ENCODE measurements at regions of chr3 and their contacts with region 1.

Region 1: GRCh38 chr3:47522082-47522987 is 8.8 kb upstream of the ELP6 start:
- DNase-seq: peak; percentile 55 to 77 (median 60)
- H3K4me3 ChIP-seq: no peak overlapping the region
- H3K4me3 Mint-ChIP-seq: no peak overlapping the region
- H3K27ac ChIP-seq: no peak overlapping the region
- H3K27ac Mint-ChIP-seq: peak overlapping the region in 3 of 8 donors; percentile 26 to 75 (median 73)
- H3K4me1 ChIP-seq: peaks cover 5% of the 10 kb centered on the region
- H3K4me1 Mint-ChIP-seq: no peaks in the 10 kb centered on the region
- H3K27me3 ChIP-seq: no peaks in the 10 kb centered on the region
- H3K27me3 Mint-ChIP-seq: peaks cover 0 to 3% of the 10 kb centered on the region in 2 donors

Region 2: GRCh38 chr3:46829699-46830208 is 692.6 kb before region 1 on chr3:
- CTCF ChIA-PET with region 1: no interaction called
- POLR2A ChIA-PET with region 1: no interaction called
- DNase-seq: peak in 1 of 5 donors; percentile 17
- H3K4me3 ChIP-seq: no peak overlapping the region
- H3K4me3 Mint-ChIP-seq: no peak overlapping the region
- H3K27ac ChIP-seq: no peak overlapping the region
- H3K27ac Mint-ChIP-seq: peak overlapping the region in 1 of 8 donors; percentile 19
- H3K4me1 ChIP-seq: no peaks in the 10 kb centered on the region
- H3K4me1 Mint-ChIP-seq: peaks cover 1 to 14% (median 5%) of the 10 kb centered on the region in 3 donors
- H3K27me3 ChIP-seq: no peaks in the 10 kb centered on the region
- H3K27me3 Mint-ChIP-seq: peaks cover 0 to 1% of the 10 kb centered on the region in 2 donors

Region 3: GRCh38 chr3:47533481-47533880 is 11.1 kb after region 1 on chr3:
- CTCF ChIA-PET with region 1: interaction called, 10 read pairs
- POLR2A ChIA-PET with region 1: no interaction called
- DNase-seq: no peak
- H3K4me3 ChIP-seq: no peak overlapping the region
- H3K4me3 Mint-ChIP-seq: no peak overlapping the region
- H3K27ac ChIP-seq: no peak overlapping the region
- H3K27ac Mint-ChIP-seq: no peak overlapping the region
- H3K4me1 ChIP-seq: no peaks in the 10 kb centered on the region
- H3K4me1 Mint-ChIP-seq: no peaks in the 10 kb centered on the region
- H3K27me3 ChIP-seq: no peaks in the 10 kb centered on the region
- H3K27me3 Mint-ChIP-seq: peaks cover 10 to 15% of the 10 kb centered on the region in 2 donors

Region 4: GRCh38 chr3:47578119-47578632 is 55.8 kb after region 1 on chr3:
- CTCF ChIA-PET with region 1: no interaction called
- POLR2A ChIA-PET with region 1: no interaction called
- DNase-seq: peak; percentile 27 to 72 (median 40)
- H3K4me3 ChIP-seq: peak overlapping the region; percentile 41
- H3K4me3 Mint-ChIP-seq: peak overlapping the region; percentile 34 to 78 (median 69)
- H3K27ac ChIP-seq: no peak overlapping the region
- H3K27ac Mint-ChIP-seq: no peak overlapping the region
- H3K4me1 ChIP-seq: peaks cover 3% of the 10 kb centered on the region
- H3K4me1 Mint-ChIP-seq: peaks cover 0 to 3% (median 1%) of the 10 kb centered on the region in 3 donors
- H3K27me3 ChIP-seq: peaks cover 16% of the 10 kb centered on the region
- H3K27me3 Mint-ChIP-seq: peaks cover 15 to 31% of the 10 kb centered on the region in 2 donors

Region 5: GRCh38 chr3:47791193-47791855 is 269.0 kb after region 1 on chr3:
- CTCF ChIA-PET with region 1: interaction called, 70 read pairs
- POLR2A ChIA-PET with region 1: interaction called, 5 read pairs
- DNase-seq: no peak
- H3K4me3 ChIP-seq: no peak overlapping the region
- H3K4me3 Mint-ChIP-seq: peak overlapping the region in 1 of 7 donors; percentile 56
- H3K27ac ChIP-seq: no peak overlapping the region
- H3K27ac Mint-ChIP-seq: peak overlapping the region in 1 of 8 donors; percentile 6
- H3K4me1 ChIP-seq: no peaks in the 10 kb centered on the region
- H3K4me1 Mint-ChIP-seq: peaks cover 3 to 5% (median 4%) of the 10 kb centered on the region in 3 donors
- H3K27me3 ChIP-seq: no peaks in the 10 kb centered on the region
- H3K27me3 Mint-ChIP-seq: no peaks in the 10 kb centered on the region

Region 6: GRCh38 chr3:47802734-47803477 is 280.6 kb after region 1 on chr3 and contains the start of gene DHX30:
- CTCF ChIA-PET with region 1: interaction called, 14 read pairs
- POLR2A ChIA-PET with region 1: no interaction called
- DNase-seq: peak; percentile 79 to 86 (median 81)
- H3K4me3 ChIP-seq: peak within 1 kb of the TSS; percentile 72
- H3K4me3 Mint-ChIP-seq: peak within 1 kb of the TSS; percentile 91 to 97 (median 94)
- H3K27ac ChIP-seq: peak within 1 kb of the TSS; percentile 76
- H3K27ac Mint-ChIP-seq: peak within 1 kb of the TSS; percentile 89 to 99 (median 96)
- H3K4me1 ChIP-seq: peaks cover 23% of the 10 kb centered on the region
- H3K4me1 Mint-ChIP-seq: peaks cover 16 to 26% (median 26%) of the 10 kb centered on the region in 3 donors
- H3K27me3 ChIP-seq: no peaks in the 10 kb centered on the region
- H3K27me3 Mint-ChIP-seq: no peaks in the 10 kb centered on the region
- total RNA-seq, gene DHX30: 117 TPM